B cell (primary cell): ENCODE measurements at regions of chr20 and their contacts with region 1.

Region 1: DNA sequence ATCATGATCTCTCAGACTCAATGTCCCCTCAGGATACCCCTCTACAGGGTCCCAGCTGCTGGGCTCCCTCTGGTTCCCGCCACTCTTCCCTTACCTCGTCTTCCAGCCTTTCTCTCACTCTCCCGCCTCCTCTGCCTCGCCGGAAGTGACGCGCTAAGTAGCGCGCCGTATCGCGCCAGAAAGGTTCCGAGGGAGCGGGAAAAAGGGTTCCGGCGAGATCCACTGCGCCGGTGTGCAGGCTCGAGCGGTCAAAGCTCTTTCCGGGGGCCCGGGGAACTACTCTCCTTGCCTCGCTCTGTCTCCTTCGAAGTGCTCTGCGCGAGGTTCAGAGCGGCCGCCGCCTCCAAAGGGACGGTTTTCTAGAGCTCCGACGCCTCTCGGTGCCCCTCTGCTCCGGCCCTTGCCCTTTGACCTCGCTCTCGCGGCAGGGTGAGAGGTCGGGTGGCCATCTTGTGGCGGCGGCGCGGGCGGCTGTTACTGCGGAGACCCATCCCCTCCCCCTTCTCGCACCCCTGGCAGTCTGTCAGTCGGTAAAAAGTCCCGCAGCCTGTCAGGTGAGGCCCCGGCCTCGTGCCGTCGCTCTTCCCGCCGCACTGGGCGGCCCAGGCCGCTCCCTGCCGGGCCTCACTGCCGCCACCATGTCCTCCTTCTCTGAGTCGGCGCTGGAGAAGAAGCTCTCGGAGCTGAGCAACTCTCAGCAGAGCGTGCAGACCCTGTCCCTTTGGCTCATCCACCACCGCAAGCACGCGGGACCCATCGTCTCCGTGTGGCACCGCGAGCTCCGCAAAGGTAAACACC is at the starts of genes RPRD1B and TTI1:
- DNase-seq: peak; percentile 95
- ATAC-seq: peak; percentile 89
- H3K4me3 ChIP-seq: peak within 1 kb of the TSS; percentile 84 to 98 (median 87)
- H3K4me3 Mint-ChIP-seq: peak within 1 kb of the TSS; percentile 95
- H3K27ac ChIP-seq: peak within 1 kb of the TSS; percentile 87 to 90
- H3K27ac Mint-ChIP-seq: peak within 1 kb of the TSS; percentile 92
- H3K4me1 ChIP-seq: peaks cover 35 to 46% of the 10 kb centered on the region in 2 donors
- H3K4me1 Mint-ChIP-seq: peaks cover 74% of the 10 kb centered on the region
- H3K27me3 ChIP-seq: no peaks in the 10 kb centered on the region
- H3K27me3 Mint-ChIP-seq: no peaks in the 10 kb centered on the region
- CTCF ChIP-seq: no peak
- total RNA-seq, gene RPRD1B: 54.9 and 55.9 TPM in 2 replicates
- total RNA-seq, gene TTI1: 33.9 and 34.5 TPM in 2 replicates

Region 2: GRCh38 chr20:37295001-37295400 is 738.5 kb before region 1 on chr20:
- CTCF ChIA-PET with region 1: no interaction called
- POLR2A ChIA-PET with region 1: no interaction called
- intact Hi-C with region 1: loop called (anchors 10 kb)
- DNase-seq: no peak
- ATAC-seq: no peak
- H3K4me3 ChIP-seq: no peak overlapping the region
- H3K4me3 Mint-ChIP-seq: no peak overlapping the region
- H3K27ac ChIP-seq: no peak overlapping the region
- H3K27ac Mint-ChIP-seq: no peak overlapping the region
- H3K4me1 ChIP-seq: peaks cover 26 to 28% of the 10 kb centered on the region in 2 donors
- H3K4me1 Mint-ChIP-seq: peaks cover 50% of the 10 kb centered on the region
- H3K27me3 ChIP-seq: no peaks in the 10 kb centered on the region
- H3K27me3 Mint-ChIP-seq: no peaks in the 10 kb centered on the region
- CTCF ChIP-seq: no peak

Region 3: GRCh38 chr20:37693635-37694626 is 339.6 kb before region 1 on chr20 and contains the start of gene CTNNBL1:
- CTCF ChIA-PET with region 1: no interaction called
- POLR2A ChIA-PET with region 1: no interaction called
- intact Hi-C with region 1: loop called (anchors 1 kb)
- DNase-seq: peak; percentile 97
- ATAC-seq: peak; percentile 94
- H3K4me3 ChIP-seq: peak within 1 kb of the TSS; percentile 61 to 97 (median 67)
- H3K4me3 Mint-ChIP-seq: peak within 1 kb of the TSS; percentile 99
- H3K27ac ChIP-seq: peak within 1 kb of the TSS; percentile 7 to 75
- H3K27ac Mint-ChIP-seq: peak within 1 kb of the TSS; percentile 94
- H3K4me1 ChIP-seq: peaks cover 23 to 31% of the 10 kb centered on the region in 2 donors
- H3K4me1 Mint-ChIP-seq: peaks cover 45% of the 10 kb centered on the region
- H3K27me3 ChIP-seq: peaks cover 0 to 8% (median 6%) of the 10 kb centered on the region in 4 experiments
- H3K27me3 Mint-ChIP-seq: peaks cover 8% of the 10 kb centered on the region
- CTCF ChIP-seq: no peak
- total RNA-seq, gene CTNNBL1: 64.7 and 64.8 TPM in 2 replicates

Region 4: DNA sequence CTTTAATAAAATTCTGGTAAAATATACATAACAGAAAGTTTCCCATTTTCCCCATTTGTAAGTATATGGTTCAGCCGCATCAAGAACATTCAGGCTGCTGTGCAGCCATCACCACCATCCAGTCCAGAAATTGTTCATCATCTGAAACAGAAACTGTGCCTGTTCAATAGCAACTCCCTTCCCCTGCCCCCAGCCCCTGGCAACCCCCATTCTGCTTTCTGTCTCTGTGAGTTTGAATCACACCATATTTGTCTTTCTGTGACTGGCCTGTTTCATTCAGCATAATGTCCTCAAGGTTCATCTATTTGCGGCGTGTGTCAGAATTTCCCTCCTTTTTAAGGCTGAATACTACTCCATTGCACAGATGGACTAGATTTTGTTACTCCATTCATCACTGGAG is 111.5 kb before region 1 on chr20:
- CTCF ChIA-PET with region 1: no interaction called
- POLR2A ChIA-PET with region 1: no interaction called
- intact Hi-C with region 1: no loop called
- DNase-seq: no peak
- ATAC-seq: no peak
- H3K4me3 ChIP-seq: no peak overlapping the region
- H3K4me3 Mint-ChIP-seq: no peak overlapping the region
- H3K27ac ChIP-seq: no peak overlapping the region
- H3K27ac Mint-ChIP-seq: no peak overlapping the region
- H3K4me1 ChIP-seq: peaks cover 8 to 18% of the 10 kb centered on the region in 2 donors
- H3K4me1 Mint-ChIP-seq: peaks cover 11% of the 10 kb centered on the region
- H3K27me3 ChIP-seq: peaks cover 0 to 13% (median 0%) of the 10 kb centered on the region in 4 experiments
- H3K27me3 Mint-ChIP-seq: peaks cover 8% of the 10 kb centered on the region
- CTCF ChIP-seq: no peak

Region 5: GRCh38 chr20:38001173-38001872 is 32.2 kb before region 1 on chr20:
- CTCF ChIA-PET with region 1: no interaction called
- POLR2A ChIA-PET with region 1: no interaction called
- intact Hi-C with region 1: no loop called
- DNase-seq: no peak
- ATAC-seq: no peak
- H3K4me3 ChIP-seq: no peak overlapping the region
- H3K4me3 Mint-ChIP-seq: no peak overlapping the region
- H3K27ac ChIP-seq: no peak overlapping the region
- H3K27ac Mint-ChIP-seq: no peak overlapping the region
- H3K4me1 ChIP-seq: no peaks in the 10 kb centered on the region
- H3K4me1 Mint-ChIP-seq: no peaks in the 10 kb centered on the region
- H3K27me3 ChIP-seq: no peaks in the 10 kb centered on the region
- H3K27me3 Mint-ChIP-seq: no peaks in the 10 kb centered on the region
- CTCF ChIP-seq: no peak

Region 6: GRCh38 chr20:38049800-38050199 is 16.3 kb after region 1 on chr20:
- CTCF ChIA-PET with region 1: no interaction called
- POLR2A ChIA-PET with region 1: no interaction called
- intact Hi-C with region 1: no loop called
- DNase-seq: no peak
- ATAC-seq: no peak
- H3K4me3 ChIP-seq: no peak overlapping the region
- H3K4me3 Mint-ChIP-seq: no peak overlapping the region
- H3K27ac ChIP-seq: no peak overlapping the region
- H3K27ac Mint-ChIP-seq: no peak overlapping the region
- H3K4me1 ChIP-seq: no peaks in the 10 kb centered on the region
- H3K4me1 Mint-ChIP-seq: peaks cover 2% of the 10 kb centered on the region
- H3K27me3 ChIP-seq: no peaks in the 10 kb centered on the region
- H3K27me3 Mint-ChIP-seq: no peaks in the 10 kb centered on the region
- CTCF ChIP-seq: no peak

Region 7: GRCh38 chr20:38094373-38094891 is 60.9 kb after region 1 on chr20:
- CTCF ChIA-PET with region 1: no interaction called
- POLR2A ChIA-PET with region 1: no interaction called
- intact Hi-C with region 1: loop called (anchors 2 kb)
- DNase-seq: peak; percentile 86
- ATAC-seq: peak; percentile 68
- H3K4me3 ChIP-seq: peak overlapping the region in 1 of 5 experiments; percentile 21
- H3K4me3 Mint-ChIP-seq: peak overlapping the region; percentile 77
- H3K27ac ChIP-seq: peak overlapping the region; percentile 95 to 96
- H3K27ac Mint-ChIP-seq: peak overlapping the region; percentile 98
- H3K4me1 ChIP-seq: peaks cover 53 to 60% of the 10 kb centered on the region in 2 donors
- H3K4me1 Mint-ChIP-seq: peaks cover 72% of the 10 kb centered on the region
- H3K27me3 ChIP-seq: no peaks in the 10 kb centered on the region
- H3K27me3 Mint-ChIP-seq: no peaks in the 10 kb centered on the region
- CTCF ChIP-seq: no peak

Region 8: DNA sequence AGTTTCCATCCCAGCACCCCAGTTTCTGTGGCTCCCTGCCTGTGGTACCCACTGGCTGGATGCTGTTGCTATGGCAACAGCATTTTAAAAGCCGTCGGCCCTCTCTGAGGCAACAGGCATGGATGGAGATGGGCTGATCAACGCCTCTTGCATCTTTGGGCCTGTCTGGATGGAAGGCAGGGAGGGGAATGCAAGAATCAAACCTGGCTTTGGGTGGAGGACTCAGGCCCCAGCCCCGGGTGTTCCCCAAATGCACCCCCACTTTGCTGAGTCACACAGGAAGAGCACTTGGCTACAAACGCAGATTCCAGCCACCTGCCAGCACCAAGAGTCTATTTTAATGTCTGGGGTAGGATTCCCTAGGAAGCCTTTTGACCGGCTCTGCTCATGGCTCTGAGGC is 177.2 kb after region 1 on chr20:
- CTCF ChIA-PET with region 1: no interaction called
- POLR2A ChIA-PET with region 1: no interaction called
- intact Hi-C with region 1: no loop called
- DNase-seq: no peak
- ATAC-seq: no peak
- H3K4me3 ChIP-seq: no peak overlapping the region
- H3K4me3 Mint-ChIP-seq: no peak overlapping the region
- H3K27ac ChIP-seq: no peak overlapping the region
- H3K27ac Mint-ChIP-seq: no peak overlapping the region
- H3K4me1 ChIP-seq: no peaks in the 10 kb centered on the region
- H3K4me1 Mint-ChIP-seq: no peaks in the 10 kb centered on the region
- H3K27me3 ChIP-seq: peaks cover 0 to 17% (median 0%) of the 10 kb centered on the region in 4 experiments
- H3K27me3 Mint-ChIP-seq: peaks cover 10% of the 10 kb centered on the region
- CTCF ChIP-seq: no peak

Region 9: DNA sequence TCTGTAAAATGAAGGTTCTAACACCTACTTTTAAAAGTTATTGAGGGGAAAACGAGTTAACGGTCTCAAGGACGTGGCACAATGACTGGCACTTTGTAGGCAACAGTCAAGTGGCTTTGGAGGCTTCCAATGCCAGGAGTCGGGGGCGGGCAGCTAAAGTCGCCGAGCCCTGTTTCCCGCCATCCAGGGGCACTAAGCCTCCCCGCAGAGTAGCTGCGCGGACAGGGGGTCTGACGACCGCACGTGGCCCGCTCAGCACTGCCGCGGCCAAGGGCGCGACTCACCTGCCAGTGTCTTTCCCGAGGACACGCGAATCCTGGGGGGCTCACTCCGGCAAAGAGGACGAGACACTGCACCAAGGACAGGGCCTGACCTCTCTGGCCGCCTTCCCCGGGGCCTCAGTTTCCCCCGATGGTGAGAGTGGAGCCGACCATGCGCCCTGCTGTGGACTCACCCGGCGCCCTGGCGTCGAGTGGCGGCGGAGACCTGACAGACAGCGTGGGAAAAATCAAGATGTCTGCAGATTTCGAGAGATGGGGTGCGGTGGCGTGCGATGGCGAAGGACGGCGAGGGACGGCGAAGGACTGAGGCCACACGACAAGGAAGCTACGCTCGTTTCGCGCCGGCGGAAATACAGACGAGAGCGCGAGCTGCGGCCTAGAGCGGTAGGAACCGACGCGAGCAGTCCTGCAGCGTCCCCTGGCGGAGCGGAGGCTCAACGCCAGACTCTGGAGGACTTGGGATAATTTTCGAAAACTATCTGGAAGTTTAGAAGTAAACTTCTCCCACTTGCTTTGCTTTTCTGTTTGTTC is 401.4 kb after region 1 on chr20 and contains the start of gene SNHG17:
- CTCF ChIA-PET with region 1: no interaction called
- POLR2A ChIA-PET with region 1: no interaction called
- intact Hi-C with region 1: loop called (anchors 2 kb)
- DNase-seq: peak; percentile 95
- ATAC-seq: peak; percentile 92
- H3K4me3 ChIP-seq: peak within 1 kb of the TSS; percentile 56 to 96 (median 88)
- H3K4me3 Mint-ChIP-seq: peak within 1 kb of the TSS; percentile 99
- H3K27ac ChIP-seq: peak within 1 kb of the TSS; percentile 72 to 83
- H3K27ac Mint-ChIP-seq: peak within 1 kb of the TSS; percentile 98
- H3K4me1 ChIP-seq: peaks cover 11 to 13% of the 10 kb centered on the region in 2 donors
- H3K4me1 Mint-ChIP-seq: peaks cover 27% of the 10 kb centered on the region
- H3K27me3 ChIP-seq: peaks cover 0 to 3% (median 0%) of the 10 kb centered on the region in 4 experiments
- H3K27me3 Mint-ChIP-seq: peaks cover 12% of the 10 kb centered on the region
- CTCF ChIP-seq: peak; percentile 100
- total RNA-seq, gene SNHG17: 49.6 and 64.3 TPM in 2 replicates